BJ (cell line): ENCODE measurements at regions of chr19 and their contacts with region 1.

Region 1: GRCh38 chr19:34639491-34640085 is 37.4 kb downstream of the SCGB2B2 start:
- DNase-seq: no peak
- H3K4me3 ChIP-seq: no peak overlapping the region
- H3K27me3 ChIP-seq: no peaks in the 10 kb centered on the region
- CTCF ChIP-seq: peak; percentile 77

Region 2: DNA sequence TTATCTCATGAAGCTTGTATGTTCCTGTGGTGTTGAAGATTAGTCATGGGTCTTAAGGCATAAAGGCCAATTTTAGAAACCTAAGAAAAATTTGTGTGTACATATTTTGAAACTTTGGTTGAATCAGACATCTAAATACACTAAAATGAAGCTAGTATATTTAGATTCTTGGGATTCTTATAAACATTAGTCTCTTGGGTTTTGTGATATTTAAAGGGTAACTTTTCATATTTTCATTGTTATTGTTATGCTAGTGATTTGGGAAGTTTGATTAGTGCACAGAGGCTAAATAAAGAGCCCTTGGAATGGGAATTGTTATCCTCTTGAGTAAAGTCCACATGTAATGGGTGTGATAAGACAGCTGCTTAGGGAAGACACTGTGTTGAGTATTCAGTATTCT is 186.9 kb before region 1 on chr19:
- CTCF ChIA-PET with region 1: no interaction called
- POLR2A ChIA-PET with region 1: no interaction called
- DNase-seq: no peak
- H3K4me3 ChIP-seq: no peak overlapping the region
- H3K27me3 ChIP-seq: no peaks in the 10 kb centered on the region
- CTCF ChIP-seq: no peak

Region 3: GRCh38 chr19:34549833-34550232 is 89.8 kb before region 1 on chr19:
- CTCF ChIA-PET with region 1: no interaction called
- POLR2A ChIA-PET with region 1: no interaction called
- DNase-seq: no peak
- H3K4me3 ChIP-seq: no peak overlapping the region
- H3K27me3 ChIP-seq: no peaks in the 10 kb centered on the region
- CTCF ChIP-seq: no peak

Region 4: DNA sequence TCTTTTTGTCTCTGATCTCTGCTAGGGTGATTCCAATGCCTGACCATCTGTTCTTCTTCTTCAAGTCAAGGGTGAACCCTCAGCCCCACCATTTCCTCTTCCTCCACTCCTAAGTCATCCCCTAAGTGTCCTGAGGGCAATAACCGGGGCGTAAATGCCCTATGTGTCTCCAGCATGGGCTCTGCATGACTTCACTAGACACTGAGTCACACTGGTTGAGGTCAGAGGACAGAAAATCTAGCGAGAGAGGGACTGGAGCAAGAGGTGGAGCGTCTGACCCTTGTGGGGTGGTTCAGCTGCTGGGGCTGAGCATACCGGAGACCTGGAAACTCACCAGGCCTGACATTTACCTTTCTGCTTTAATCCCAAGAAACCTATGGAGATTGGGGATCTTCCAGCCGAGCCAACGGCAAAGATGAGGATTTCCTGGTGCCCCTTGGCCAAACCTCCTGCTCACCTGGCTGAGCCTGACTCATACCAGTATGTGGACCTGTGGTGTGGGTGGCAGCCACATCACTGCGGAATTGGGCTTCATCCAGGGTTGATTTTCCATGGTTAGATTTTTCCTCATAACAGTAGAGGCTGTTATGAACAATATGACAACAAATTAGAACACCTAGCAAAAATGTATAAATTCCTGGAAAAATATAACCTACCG is 10.4 kb after region 1 on chr19:
- CTCF ChIA-PET with region 1: interaction called, 11 read pairs
- POLR2A ChIA-PET with region 1: no interaction called
- DNase-seq: no peak
- H3K4me3 ChIP-seq: no peak overlapping the region
- H3K27me3 ChIP-seq: no peaks in the 10 kb centered on the region
- CTCF ChIP-seq: no peak

Region 5: GRCh38 chr19:34662919-34663318 is 23.3 kb after region 1 on chr19:
- CTCF ChIA-PET with region 1: interaction called, 12 read pairs
- POLR2A ChIA-PET with region 1: no interaction called
- DNase-seq: no peak
- H3K4me3 ChIP-seq: no peak overlapping the region
- H3K27me3 ChIP-seq: no peaks in the 10 kb centered on the region
- CTCF ChIP-seq: peak; percentile 39

Region 6: DNA sequence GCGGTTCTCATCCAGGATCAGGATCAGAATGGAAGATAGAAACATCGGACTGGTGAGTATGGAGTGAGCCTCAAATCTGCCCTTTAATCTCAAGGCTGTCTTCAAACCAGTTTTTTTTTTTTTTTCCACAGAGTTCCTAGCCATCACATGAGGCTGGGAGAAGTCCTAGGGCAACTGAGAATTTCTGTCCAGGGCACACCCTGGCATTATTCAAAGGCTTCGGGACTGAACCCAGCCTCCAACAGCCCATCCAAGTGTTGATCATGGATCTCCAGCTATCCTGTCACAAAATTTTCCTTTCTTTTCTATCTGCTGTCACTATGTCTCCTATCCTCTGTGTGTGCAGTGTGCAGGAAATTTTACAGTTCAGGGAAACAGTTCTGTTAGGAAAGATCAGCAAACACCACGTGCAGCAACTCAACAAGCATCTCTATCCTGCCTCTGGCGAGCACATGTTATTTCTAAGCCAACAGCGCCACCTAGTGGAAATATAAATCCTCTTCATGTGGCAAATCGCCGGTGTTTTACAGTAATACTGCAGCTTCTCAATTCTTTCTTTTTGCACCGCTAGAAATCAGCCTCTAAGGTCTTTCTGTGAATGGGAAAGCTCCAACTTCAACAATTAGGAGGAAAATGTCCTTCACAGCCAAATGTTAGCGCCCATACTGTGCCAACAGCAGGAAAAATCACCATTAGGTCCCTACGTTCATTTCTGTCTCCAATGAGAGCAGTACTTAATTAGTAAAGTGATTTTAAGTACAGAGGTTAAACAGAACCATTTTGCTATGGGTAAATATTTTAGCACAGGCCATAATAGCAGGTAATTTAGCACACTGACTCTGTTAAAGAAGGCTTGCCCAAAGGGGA is 73.0 kb after region 1 on chr19:
- CTCF ChIA-PET with region 1: interaction called, 69 read pairs
- POLR2A ChIA-PET with region 1: no interaction called
- DNase-seq: peak; percentile 10
- H3K4me3 ChIP-seq: no peak overlapping the region
- H3K27me3 ChIP-seq: no peaks in the 10 kb centered on the region
- CTCF ChIP-seq: peak; percentile 50

Region 7: DNA sequence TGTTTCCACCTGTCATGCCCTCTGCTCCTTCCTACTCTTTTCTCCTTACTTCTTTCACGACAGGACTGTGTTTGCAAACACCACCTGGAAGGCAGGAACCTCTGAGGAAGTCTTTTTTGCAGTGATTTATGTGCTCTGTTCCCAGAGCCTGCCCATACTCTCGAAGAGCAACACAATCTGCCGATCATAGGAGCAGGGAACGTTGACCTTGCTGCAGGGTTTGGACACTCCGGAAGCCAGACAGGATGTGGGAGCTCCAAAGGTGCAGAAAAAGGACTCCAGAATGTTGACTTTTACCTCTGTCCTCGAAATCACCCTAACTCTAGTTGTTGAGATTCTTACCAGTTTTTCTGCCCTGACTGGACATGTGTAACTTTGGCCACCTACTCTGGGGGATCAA is 85.8 kb after region 1 on chr19:
- CTCF ChIA-PET with region 1: no interaction called
- POLR2A ChIA-PET with region 1: no interaction called
- DNase-seq: no peak
- H3K4me3 ChIP-seq: no peak overlapping the region
- H3K27me3 ChIP-seq: peaks cover 1% of the 10 kb centered on the region; the same call in 1 of the 2 replicates
- CTCF ChIP-seq: no peak